Activated CD4-positive, alpha-beta T cell treated with anti-CD3 and anti-CD28 coated beads for 36 hours (primary cell): ENCODE measurements at regions of chr21 and their contacts with region 1.

Region 1: GRCh38 chr21:33641336-33642026 is at the start of gene CRYZL1:
- DNase-seq: peak; percentile 100
- ATAC-seq: peak; percentile 83
- H3K4me3 Mint-ChIP-seq: peak within 1 kb of the TSS; percentile 82
- H3K27ac Mint-ChIP-seq: peak within 1 kb of the TSS; percentile 96
- H3K4me1 Mint-ChIP-seq: peaks cover 33% of the 10 kb centered on the region
- H3K27me3 Mint-ChIP-seq: peaks cover 10% of the 10 kb centered on the region
- total RNA-seq, gene CRYZL1: 31.4 to 35.2 TPM

Region 2: DNA sequence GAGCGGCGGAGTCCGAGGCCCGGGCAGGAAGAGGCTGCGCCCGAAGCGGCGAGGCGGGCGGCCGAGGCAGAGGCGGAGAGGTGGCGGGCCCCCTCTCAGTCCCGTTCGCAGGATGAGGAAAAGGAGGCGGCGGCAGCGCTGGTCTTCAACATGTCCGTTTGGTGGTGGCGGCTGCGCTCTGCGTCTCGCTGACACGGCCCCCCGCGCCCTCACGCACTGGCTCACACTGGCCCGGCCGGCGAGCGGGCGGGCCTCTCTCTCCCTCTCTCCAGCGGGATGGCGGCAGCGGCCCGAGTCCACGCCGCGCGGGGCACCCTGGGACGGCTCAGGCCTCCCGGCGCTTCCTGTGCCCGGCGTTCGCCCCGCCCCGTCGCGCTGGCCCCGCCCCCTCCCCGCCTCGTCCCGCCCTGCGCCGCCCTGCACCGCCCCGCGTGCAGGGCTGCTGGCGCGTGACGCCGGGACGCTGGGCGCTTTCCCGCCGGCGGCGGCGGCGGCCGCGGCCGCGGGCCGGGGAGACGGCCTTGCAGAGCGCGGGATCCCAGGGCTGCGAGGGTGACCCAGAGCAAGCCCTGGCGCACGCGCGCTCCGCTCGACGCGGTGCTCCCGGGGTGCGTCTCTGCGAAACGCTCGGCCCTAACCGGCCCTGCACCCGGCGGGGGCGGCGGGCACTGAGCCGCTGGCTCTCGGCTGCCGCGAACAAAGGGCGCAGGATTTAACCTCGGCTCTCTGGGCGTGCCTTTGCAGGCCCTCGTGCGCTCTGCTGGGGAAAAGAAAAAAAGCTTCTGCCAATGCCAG is 1909.5 kb before region 1 on chr21 and contains the start of gene SCAF4:
- CTCF ChIA-PET with region 1: no interaction called
- POLR2A ChIA-PET with region 1: no interaction called
- intact Hi-C with region 1: loop called in 1 of 2 experiments (anchors 5 kb)
- DNase-seq: peak; percentile 90
- ATAC-seq: peak; percentile 88
- H3K4me3 Mint-ChIP-seq: no peak within 1 kb of the TSS
- H3K27ac Mint-ChIP-seq: peak within 1 kb of the TSS; percentile 78
- H3K4me1 Mint-ChIP-seq: peaks cover 11% of the 10 kb centered on the region
- H3K27me3 Mint-ChIP-seq: no peaks in the 10 kb centered on the region
- total RNA-seq, gene SCAF4: 47.1 to 62.8 TPM

Region 3: DNA sequence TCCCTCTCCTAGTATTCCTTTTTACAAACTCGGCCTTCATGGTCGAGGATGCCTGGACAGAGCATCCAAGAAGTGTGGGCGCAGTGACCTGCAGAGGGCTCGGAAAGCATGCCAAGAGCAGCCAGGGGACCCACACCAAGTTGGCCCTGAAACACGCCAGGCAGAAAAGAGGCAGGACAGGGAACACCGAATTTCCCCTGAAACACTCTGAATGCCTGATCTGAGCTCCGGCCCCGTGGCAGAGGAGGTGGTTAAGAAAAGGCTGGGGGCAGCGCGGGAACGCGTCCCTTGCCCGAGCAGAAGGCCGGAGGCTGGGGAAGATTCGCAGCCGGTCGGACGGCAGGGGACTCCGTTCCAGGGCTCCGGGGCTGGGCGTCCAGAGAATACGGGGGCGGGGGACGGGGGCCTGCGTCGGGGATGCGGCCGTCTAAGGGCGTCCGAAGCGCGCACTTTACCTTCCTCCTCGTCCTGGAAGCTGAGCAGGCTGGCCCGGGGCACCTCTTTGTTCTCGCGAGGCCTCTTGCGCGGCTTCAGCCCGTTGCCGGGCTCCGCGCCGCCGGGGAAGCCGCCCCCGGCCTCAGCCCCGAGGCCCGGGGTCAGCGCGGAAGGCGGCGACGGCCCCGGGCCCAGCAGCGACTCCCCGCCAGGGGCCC is 870.5 kb before region 1 on chr21:
- CTCF ChIA-PET with region 1: no interaction called
- POLR2A ChIA-PET with region 1: no interaction called
- intact Hi-C with region 1: loop called in 1 of 2 experiments (anchors 1 kb)
- DNase-seq: peak; percentile 76
- ATAC-seq: peak; percentile 17
- H3K4me3 Mint-ChIP-seq: peak overlapping the region; percentile 99
- H3K27ac Mint-ChIP-seq: peak overlapping the region; percentile 96
- H3K4me1 Mint-ChIP-seq: peaks cover 54% of the 10 kb centered on the region
- H3K27me3 Mint-ChIP-seq: no peaks in the 10 kb centered on the region

Region 4: GRCh38 chr21:33479679-33480480 is 161.6 kb before region 1 on chr21 and contains the start of gene TMEM50B:
- CTCF ChIA-PET with region 1: no interaction called
- POLR2A ChIA-PET with region 1: no interaction called
- intact Hi-C with region 1: loop called in 1 of 2 experiments (anchors 1 kb)
- DNase-seq: peak; percentile 99
- ATAC-seq: peak; percentile 97
- H3K4me3 Mint-ChIP-seq: peak within 1 kb of the TSS; percentile 83
- H3K27ac Mint-ChIP-seq: peak within 1 kb of the TSS; percentile 88
- H3K4me1 Mint-ChIP-seq: peaks cover 17% of the 10 kb centered on the region
- H3K27me3 Mint-ChIP-seq: no peaks in the 10 kb centered on the region
- total RNA-seq, gene TMEM50B: 13.6 to 15.2 TPM

Region 5: DNA sequence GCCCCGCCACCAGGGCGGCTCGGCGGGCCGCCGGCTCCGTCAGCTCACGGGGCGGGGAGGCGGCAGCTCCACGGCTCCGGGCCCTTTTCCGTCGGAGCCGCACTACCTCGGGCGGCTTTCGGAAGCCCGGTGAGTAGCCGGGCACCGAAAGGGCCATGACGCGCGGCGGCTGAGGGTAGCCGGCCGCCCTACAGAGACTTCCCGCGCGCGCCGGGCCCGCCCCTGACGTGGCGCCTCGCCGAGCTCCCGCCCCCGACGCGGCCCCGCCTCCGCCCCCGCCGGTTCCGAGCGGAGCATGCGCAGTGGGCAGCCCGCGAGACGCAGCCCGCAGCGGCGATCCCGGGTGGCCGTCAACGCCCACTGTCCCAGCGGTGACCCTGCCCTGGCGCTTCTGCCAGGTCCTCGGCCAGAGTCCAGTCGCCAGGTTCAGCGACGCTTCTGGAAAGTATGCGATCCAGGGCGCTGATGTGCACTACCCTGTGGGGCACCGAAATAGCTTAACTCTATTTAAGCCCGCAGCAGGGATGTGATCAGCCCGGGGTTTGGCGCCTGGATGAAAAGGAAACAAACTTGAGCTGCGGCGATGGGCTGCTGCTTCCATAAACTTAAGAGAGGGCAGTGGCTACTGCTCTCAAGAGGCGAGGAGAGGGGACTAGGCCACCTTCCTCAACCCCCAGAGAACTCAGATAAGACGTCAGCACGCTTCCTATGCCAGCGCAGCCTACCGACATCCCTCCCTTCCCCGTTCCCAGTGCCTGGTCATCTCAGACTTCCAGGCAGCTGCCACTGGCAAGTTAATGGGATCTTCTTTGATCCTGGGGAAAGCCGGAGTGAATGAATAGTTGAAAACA is 52.8 kb before region 1 on chr21 and contains the start of gene DONSON:
- CTCF ChIA-PET with region 1: interaction called, 3 read pairs
- POLR2A ChIA-PET with region 1: no interaction called
- intact Hi-C with region 1: loop called (anchors 1 kb)
- DNase-seq: peak; percentile 93
- ATAC-seq: peak; percentile 92
- H3K4me3 Mint-ChIP-seq: peak within 1 kb of the TSS; percentile 91
- H3K27ac Mint-ChIP-seq: peak within 1 kb of the TSS; percentile 87
- H3K4me1 Mint-ChIP-seq: peaks cover 19% of the 10 kb centered on the region
- H3K27me3 Mint-ChIP-seq: no peaks in the 10 kb centered on the region
- total RNA-seq, gene DONSON: 39.5 to 41.8 TPM

Region 6: GRCh38 chr21:33655591-33656221 is 14.2 kb after region 1 on chr21:
- CTCF ChIA-PET with region 1: no interaction called
- POLR2A ChIA-PET with region 1: no interaction called
- intact Hi-C with region 1: no loop called
- DNase-seq: no peak
- ATAC-seq: no peak
- H3K4me3 Mint-ChIP-seq: no peak overlapping the region
- H3K27ac Mint-ChIP-seq: no peak overlapping the region
- H3K4me1 Mint-ChIP-seq: no peaks in the 10 kb centered on the region
- H3K27me3 Mint-ChIP-seq: no peaks in the 10 kb centered on the region

Region 7: DNA sequence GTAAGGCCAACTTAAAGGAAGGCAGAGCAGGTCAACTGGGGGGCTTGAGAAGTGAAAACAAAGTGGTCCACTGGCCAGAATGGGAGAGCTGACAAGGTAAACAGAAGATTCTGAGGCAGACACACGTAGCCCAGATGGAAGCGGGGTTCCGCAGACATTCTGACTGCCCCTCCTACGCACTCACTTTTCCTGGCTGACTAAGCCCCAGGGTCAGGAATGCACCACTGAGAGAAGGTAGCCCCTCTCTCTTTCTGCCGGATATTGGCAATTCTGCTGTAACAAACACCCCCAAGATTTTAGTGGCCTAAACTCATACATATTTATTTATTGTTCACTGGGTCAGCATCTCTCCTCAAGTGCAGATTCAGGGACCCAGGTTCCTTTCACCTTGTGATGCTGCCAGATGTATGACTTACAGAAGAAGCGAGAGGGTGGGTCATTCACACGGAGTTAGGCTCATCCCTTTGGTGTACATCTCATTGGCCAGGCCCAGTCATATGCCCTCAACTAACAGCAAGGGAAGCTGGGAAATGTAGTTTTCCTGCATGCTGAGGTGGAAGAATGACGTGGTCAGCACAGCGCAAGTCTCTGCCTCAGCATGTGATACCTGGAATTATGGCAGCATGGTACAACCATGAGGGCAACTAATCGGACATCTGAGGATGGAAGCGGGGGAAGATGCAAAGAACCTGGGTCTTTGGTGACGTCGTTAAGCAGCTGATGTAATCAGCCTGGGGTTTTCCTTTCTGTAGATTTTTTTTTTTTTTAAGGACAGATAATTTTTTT is 388.5 kb after region 1 on chr21:
- CTCF ChIA-PET with region 1: no interaction called
- POLR2A ChIA-PET with region 1: no interaction called
- intact Hi-C with region 1: loop called in 1 of 2 experiments (anchors 5 kb)
- DNase-seq: peak; percentile 76
- ATAC-seq: peak; percentile 97
- H3K4me3 Mint-ChIP-seq: peak overlapping the region; percentile 1
- H3K27ac Mint-ChIP-seq: peak overlapping the region; percentile 89
- H3K4me1 Mint-ChIP-seq: peaks cover 35% of the 10 kb centered on the region
- H3K27me3 Mint-ChIP-seq: no peaks in the 10 kb centered on the region